ENCODE measurements at regions of chr10 and their contacts with region 1.

Region 1: DNA sequence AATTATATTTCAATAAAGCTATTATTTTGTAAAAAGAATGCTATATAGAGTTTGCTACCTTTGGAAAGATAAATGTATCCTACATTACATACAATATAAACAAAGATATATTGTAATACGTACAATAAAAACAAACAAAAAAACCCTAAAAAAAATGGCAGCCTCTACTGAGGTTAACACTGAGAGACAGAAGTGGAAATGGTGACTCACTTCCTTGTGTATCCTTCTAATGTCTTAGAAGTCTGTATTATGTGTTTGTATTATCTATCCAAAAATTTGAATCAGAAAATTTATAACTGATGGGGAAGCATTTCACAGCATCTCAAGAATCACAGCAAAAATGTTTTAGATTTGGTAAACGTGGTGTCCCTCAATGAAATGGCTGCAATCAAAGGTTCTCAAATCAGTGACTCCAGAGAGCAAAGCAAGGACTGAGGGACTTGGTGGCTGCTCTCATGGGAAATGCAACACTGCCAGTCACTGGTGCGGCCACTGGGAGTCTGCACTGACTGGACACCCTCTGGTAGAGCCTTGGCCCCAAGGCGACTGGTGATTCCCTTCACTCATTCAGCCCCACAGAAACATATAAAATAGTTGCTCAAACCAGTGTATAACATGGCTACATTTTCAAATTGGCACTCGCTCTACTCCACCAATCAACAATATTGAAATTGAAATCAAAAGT is 53.8 kb downstream of the PANK1 start:
- DNase-seq: peak; percentile 9 to 40
- H3K4me3 ChIP-seq: no peak overlapping the region
- H3K4me3 Mint-ChIP-seq: no peak overlapping the region
- H3K27ac Mint-ChIP-seq: peak overlapping the region; percentile 27
- H3K4me1 ChIP-seq: peaks cover 13% of the 10 kb centered on the region
- H3K4me1 Mint-ChIP-seq: peaks cover 6% of the 10 kb centered on the region
- H3K27me3 ChIP-seq: no peaks in the 10 kb centered on the region
- H3K27me3 Mint-ChIP-seq: no peaks in the 10 kb centered on the region
- CTCF ChIP-seq: no peak

Region 2: DNA sequence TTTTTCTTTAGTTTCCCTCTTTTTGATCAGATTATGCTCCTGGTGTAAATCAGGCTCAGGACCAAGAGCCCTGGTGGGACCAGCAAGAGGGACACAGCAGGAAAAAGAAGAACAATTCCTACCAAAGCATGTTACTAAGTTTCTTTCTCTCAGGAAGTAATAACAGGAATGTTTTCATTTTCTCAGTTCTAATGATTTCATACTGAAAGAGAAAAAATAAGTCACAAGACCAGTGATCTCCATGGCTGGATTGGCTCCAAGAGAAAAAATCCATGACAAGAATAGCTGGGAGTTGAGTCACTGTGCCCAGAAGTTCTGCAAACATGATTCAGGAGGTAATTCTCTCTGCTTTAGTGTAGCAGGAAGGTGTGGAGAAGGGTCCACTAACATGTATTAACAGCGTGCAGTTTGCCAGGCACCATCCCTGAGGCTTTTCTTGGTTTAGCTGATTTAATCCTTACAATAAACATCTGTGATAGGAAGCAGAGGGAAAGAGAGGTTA is 313.2 kb before region 1 on chr10:
- CTCF ChIA-PET with region 1: no interaction called
- POLR2A ChIA-PET with region 1: no interaction called
- intact Hi-C with region 1: no loop called
- DNase-seq: peak in 1 of 2 experiments; percentile 33
- H3K4me3 ChIP-seq: no peak overlapping the region
- H3K4me3 Mint-ChIP-seq: no peak overlapping the region
- H3K27ac Mint-ChIP-seq: peak overlapping the region; percentile 34
- H3K4me1 ChIP-seq: peaks cover 11% of the 10 kb centered on the region
- H3K4me1 Mint-ChIP-seq: peaks cover 15% of the 10 kb centered on the region
- H3K27me3 ChIP-seq: no peaks in the 10 kb centered on the region
- H3K27me3 Mint-ChIP-seq: no peaks in the 10 kb centered on the region
- CTCF ChIP-seq: no peak

Region 3: DNA sequence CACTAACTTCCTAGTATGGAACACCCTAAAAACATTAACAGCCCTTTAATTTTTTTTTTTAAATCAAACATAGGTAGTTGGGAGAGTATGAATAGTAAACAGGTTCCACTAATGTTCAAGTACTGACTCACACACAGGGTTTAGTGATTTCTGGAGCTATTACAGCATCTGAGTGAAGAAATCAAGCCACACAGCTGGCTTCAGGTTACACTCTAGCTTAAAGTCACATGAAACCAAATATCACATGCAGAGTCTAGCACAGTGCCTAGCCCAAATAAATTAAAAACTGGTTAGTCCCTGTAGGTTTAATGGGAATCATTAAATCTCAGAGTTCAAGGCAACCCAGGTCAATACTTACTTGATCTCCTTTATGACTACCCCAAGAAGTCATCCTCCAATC is 42.2 kb after region 1 on chr10:
- CTCF ChIA-PET with region 1: no interaction called
- POLR2A ChIA-PET with region 1: no interaction called
- intact Hi-C with region 1: loop called (anchors 5 kb)
- DNase-seq: no peak
- H3K4me3 ChIP-seq: no peak overlapping the region
- H3K4me3 Mint-ChIP-seq: no peak overlapping the region
- H3K27ac Mint-ChIP-seq: no peak overlapping the region
- H3K4me1 ChIP-seq: peaks cover 16% of the 10 kb centered on the region; the same call in 1 of the 2 replicates
- H3K4me1 Mint-ChIP-seq: peaks cover 9% of the 10 kb centered on the region
- H3K27me3 ChIP-seq: no peaks in the 10 kb centered on the region
- H3K27me3 Mint-ChIP-seq: no peaks in the 10 kb centered on the region
- CTCF ChIP-seq: no peak